T-cell (primary cell): ENCODE measurements at regions of chr7 and their contacts with region 1.

Region 1: DNA sequence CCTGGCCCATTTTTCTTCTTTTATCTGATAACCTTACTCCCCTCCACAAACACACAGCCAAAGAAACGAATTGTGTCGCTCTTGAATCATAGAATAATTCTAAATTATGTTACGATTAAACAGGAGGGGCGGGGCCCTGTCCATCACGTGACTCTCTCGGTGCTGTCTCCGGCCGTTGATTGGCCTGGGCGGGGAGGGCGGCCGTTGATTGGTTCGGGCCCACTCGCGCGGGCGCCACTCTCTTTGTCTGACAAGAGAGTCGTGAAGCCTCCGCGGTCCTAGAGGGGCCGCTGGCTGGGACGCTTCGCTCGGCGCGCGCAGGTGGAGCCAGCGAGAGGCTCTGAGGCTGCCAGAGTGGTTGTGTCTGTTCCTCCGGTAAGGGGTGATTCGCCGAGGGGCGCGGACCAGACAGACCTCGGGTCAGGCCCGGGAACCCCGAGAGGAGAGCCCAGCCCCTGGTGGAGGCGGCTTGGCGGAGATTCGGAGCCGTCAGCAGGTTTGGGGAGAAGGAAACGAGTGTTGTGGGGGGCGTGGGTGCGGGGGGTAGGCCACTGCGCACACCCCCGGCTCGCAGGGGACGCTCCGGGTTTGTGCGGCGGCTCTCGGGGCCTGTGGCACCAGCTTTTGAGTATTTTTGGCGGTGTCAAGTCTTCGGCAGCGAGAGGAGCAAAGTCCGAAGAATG is at the start of gene ZNF789:
- DNase-seq: peak; percentile 92 to 100 (median 98)
- ATAC-seq: peak; percentile 95 to 99 (median 99)
- H3K4me3 ChIP-seq: peak within 1 kb of the TSS; percentile 63 to 88
- H3K4me3 Mint-ChIP-seq: peak within 1 kb of the TSS; percentile 90 to 99 (median 96)
- H3K27ac ChIP-seq: peak within 1 kb of the TSS; percentile 70
- H3K27ac Mint-ChIP-seq: peak within 1 kb of the TSS; percentile 88 to 94
- H3K4me1 ChIP-seq: peaks cover 6 to 25% of the 10 kb centered on the region in 2 experiments
- H3K4me1 Mint-ChIP-seq: peaks cover 34 to 39% (median 34%) of the 10 kb centered on the region in 3 donors
- H3K27me3 ChIP-seq: no peaks in the 10 kb centered on the region
- H3K27me3 Mint-ChIP-seq: peaks cover 0 to 4% of the 10 kb centered on the region in 2 donors
- total RNA-seq, gene ZNF789: 17.0 to 24.8 (median 19.7) TPM

Region 2: DNA sequence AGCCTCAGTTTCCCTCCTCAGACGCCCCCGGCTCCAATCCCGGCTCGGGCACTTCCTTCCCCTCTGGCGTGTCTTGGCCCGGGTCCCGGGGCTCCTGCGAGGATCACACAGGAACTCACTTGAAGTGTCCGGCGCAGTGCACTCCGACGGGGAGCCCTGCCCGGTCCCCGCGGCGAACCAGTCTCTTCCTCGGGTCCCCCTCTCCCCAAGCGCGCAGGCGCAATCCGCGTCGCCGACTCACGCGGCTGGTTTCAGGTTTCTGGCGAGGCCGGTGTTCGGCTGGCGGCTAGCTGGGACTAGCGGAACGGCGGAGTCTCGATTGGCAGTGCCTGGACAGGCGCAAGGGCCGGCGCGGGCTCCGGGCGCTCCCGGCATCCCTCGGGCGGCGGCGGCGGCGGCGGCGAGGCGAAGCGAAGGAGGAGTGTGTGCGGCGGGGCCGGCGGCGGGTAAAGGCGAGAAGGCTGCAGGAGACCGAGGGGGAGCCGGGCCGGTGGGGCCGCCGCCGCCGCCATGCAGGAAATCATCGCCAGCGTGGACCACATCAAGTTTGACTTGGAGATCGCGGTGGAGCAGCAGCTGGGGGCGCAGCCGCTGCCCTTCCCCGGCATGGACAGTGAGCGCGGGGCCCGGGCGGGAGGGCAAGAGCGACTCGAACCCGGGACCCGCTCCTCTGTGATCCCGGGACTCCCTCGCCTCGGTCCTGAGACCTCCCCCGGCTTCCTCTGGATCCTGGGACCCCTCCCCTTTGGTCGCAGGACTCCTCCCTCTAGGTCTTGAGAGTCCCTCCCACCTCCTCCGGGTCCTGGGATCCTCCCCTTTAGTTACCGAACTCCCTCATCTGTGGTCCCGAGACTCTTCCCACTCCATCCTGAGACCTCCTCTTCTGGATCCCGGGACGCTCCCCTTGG is 33.9 kb before region 1 on chr7 and contains the starts of genes CPSF4 and PTCD1:
- CTCF ChIA-PET with region 1: no interaction called
- POLR2A ChIA-PET with region 1: no interaction called
- DNase-seq: peak; percentile 62 to 91 (median 77)
- ATAC-seq: peak; percentile 84 to 94 (median 90)
- H3K4me3 ChIP-seq: peak within 1 kb of the TSS; percentile 82 to 92
- H3K4me3 Mint-ChIP-seq: peak within 1 kb of the TSS; percentile 91 to 100 (median 95)
- H3K27ac ChIP-seq: peak within 1 kb of the TSS; percentile 85
- H3K27ac Mint-ChIP-seq: peak within 1 kb of the TSS; percentile 95 to 96
- H3K4me1 ChIP-seq: peaks cover 0 to 28% of the 10 kb centered on the region in 2 experiments
- H3K4me1 Mint-ChIP-seq: peaks cover 32 to 40% (median 39%) of the 10 kb centered on the region in 3 donors
- H3K27me3 ChIP-seq: no peaks in the 10 kb centered on the region
- H3K27me3 Mint-ChIP-seq: no peaks in the 10 kb centered on the region
- total RNA-seq, gene CPSF4: 44.4 to 58.1 (median 52.3) TPM
- total RNA-seq, gene PTCD1: 5.4 to 11.6 (median 10.5) TPM

Region 3: GRCh38 chr7:99551767-99552463 is 79.2 kb after region 1 on chr7 and contains the start of gene FAM200A:
- CTCF ChIA-PET with region 1: no interaction called
- POLR2A ChIA-PET with region 1: interaction called in 1 of 2 experiments, 16 read pairs
- DNase-seq: peak; percentile 60 to 95 (median 86)
- ATAC-seq: peak; percentile 97 to 100 (median 99)
- H3K4me3 ChIP-seq: peak within 1 kb of the TSS; percentile 80 to 89
- H3K4me3 Mint-ChIP-seq: peak within 1 kb of the TSS; percentile 90 to 94 (median 93)
- H3K27ac ChIP-seq: peak within 1 kb of the TSS; percentile 86
- H3K27ac Mint-ChIP-seq: peak within 1 kb of the TSS; percentile 85 to 92
- H3K4me1 ChIP-seq: peaks cover 8 to 17% of the 10 kb centered on the region in 2 experiments
- H3K4me1 Mint-ChIP-seq: peaks cover 43 to 47% (median 46%) of the 10 kb centered on the region in 3 donors
- H3K27me3 ChIP-seq: no peaks in the 10 kb centered on the region
- H3K27me3 Mint-ChIP-seq: no peaks in the 10 kb centered on the region
- total RNA-seq, gene FAM200A: 2.8 to 8.9 (median 8.5) TPM

Region 4: DNA sequence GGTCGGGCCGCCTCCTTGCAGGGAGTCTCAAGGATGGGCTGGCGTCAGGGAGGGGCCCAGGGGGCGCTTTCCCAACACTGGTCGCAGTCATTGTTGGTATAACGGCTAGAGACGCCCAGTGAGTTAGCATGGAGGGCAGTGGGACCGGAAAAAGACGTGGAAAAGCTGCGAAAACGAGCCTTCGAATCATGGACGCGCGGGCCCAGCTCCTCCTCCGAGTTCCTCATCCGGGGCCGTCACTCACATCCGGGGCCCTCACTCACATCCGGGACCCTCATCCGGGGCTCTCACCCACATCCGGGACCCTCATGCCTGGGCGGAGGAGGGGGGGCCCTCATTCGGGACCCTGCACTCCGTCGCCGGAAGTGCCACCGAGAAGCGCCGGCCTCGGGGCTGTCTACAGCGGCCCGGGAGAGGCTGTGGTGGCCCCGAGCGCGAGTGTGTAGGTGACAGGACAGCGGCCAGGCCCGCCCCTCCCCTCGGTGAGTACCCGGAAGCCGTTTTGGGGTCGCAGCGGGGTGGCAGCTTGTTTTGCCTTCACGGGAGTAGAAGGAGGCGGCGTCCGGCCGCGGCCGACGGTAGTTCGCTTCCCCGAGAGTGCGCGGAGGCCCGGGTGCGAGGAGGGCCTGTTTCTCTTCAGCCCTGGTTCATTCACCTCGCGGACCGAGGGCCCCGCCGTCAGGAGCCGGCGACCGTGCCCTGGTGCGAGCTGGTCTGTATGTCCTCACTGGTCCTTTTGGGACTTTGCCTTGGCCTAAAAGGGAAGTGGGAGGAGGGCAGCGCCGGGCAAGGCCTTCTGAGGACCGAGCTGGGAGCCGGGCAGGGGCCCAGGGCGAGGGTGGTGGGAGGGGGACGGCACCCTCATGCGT is 85.8 kb after region 1 on chr7 and contains the start of gene ZNF655:
- CTCF ChIA-PET with region 1: interaction called in 1 of 2 experiments, 11 read pairs
- POLR2A ChIA-PET with region 1: interaction called in 1 of 2 experiments, 3 read pairs
- DNase-seq: peak; percentile 86 to 96 (median 93)
- ATAC-seq: peak; percentile 84 to 88 (median 84)
- H3K4me3 ChIP-seq: peak within 1 kb of the TSS; percentile 85 to 98
- H3K4me3 Mint-ChIP-seq: peak within 1 kb of the TSS; percentile 93 to 99 (median 99)
- H3K27ac ChIP-seq: peak within 1 kb of the TSS; percentile 95
- H3K27ac Mint-ChIP-seq: peak within 1 kb of the TSS; percentile 99 to 100
- H3K4me1 ChIP-seq: peaks cover 14 to 34% of the 10 kb centered on the region in 2 experiments
- H3K4me1 Mint-ChIP-seq: peaks cover 55 to 66% (median 59%) of the 10 kb centered on the region in 3 donors
- H3K27me3 ChIP-seq: no peaks in the 10 kb centered on the region
- H3K27me3 Mint-ChIP-seq: no peaks in the 10 kb centered on the region
- total RNA-seq, gene ZNF655: 145 to 163 (median 157) TPM

Region 5: DNA sequence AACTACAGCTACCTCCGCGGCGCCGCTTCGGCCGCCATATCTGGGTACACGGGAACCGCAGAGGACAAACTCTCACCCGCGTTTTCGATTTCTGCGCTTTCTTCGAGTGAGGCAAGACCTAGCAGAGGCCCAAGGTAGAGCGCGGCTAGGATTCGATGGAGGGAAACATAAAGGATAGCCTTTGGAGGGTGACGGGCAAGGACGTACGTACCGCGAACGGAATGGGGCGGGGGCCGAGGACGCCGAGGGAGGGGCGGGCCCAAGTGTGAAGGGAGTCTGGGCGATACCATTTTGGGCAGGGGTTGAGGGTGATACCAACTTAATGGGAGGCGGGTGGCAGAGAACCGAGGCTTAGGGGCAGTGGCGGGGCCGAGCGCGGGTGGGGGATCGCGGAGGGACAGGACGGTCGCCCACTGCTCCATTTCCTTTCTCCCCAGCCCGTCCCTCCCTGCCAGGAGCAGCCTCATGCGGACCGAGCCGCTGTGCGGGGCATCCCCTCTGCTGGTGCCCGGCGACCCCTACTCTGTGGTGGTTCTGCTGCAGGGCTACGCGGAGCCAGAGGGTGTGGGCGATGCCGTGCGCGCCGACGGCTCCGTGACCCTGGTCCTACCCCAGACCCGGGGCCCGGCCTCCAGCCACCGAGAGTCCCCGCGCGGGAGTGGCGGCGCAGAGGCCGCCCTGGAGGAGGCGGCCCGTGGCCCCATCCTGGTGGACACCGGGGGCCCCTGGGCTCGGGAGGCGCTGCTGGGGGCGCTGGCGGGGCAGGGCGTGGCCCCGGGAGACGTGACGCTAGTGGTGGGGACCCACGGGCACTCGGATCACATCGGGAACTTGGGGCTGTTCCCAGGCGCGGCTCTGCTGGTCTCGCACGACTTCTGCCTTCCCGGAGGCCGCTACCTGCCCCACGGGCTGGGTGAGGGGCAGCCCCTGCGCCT is 654.5 kb after region 1 on chr7 and contains the start of gene MBLAC1:
- CTCF ChIA-PET with region 1: no interaction called
- POLR2A ChIA-PET with region 1: interaction called in 1 of 2 experiments, 13 read pairs
- DNase-seq: peak; percentile 80 to 96 (median 89)
- ATAC-seq: peak; percentile 77 to 86 (median 80)
- H3K4me3 ChIP-seq: peak within 1 kb of the TSS; percentile 82 to 91
- H3K4me3 Mint-ChIP-seq: peak within 1 kb of the TSS; percentile 98 to 100 (median 100)
- H3K27ac ChIP-seq: peak within 1 kb of the TSS; percentile 97
- H3K27ac Mint-ChIP-seq: peak within 1 kb of the TSS; percentile 100
- H3K4me1 ChIP-seq: peaks cover 7 to 50% of the 10 kb centered on the region in 2 experiments
- H3K4me1 Mint-ChIP-seq: peaks cover 41 to 45% (median 42%) of the 10 kb centered on the region in 3 donors
- H3K27me3 ChIP-seq: no peaks in the 10 kb centered on the region
- H3K27me3 Mint-ChIP-seq: no peaks in the 10 kb centered on the region
- total RNA-seq, gene MBLAC1: 3.2 to 8.6 (median 5.3) TPM